A673 (cell line): ENCODE measurements at regions of chr3 and their contacts with region 1.

Region 1: GRCh38 chr3:4656059-4656458 is 162.9 kb downstream of the ITPR1 start:
- DNase-seq: peak; percentile 82
- H3K4me3 ChIP-seq: no peak overlapping the region
- H3K27ac ChIP-seq: no peak overlapping the region
- H3K4me1 ChIP-seq: no peaks in the 10 kb centered on the region
- H3K27me3 ChIP-seq: no peaks in the 10 kb centered on the region
- CTCF ChIP-seq: peak; percentile 89

Region 2: GRCh38 chr3:4394048-4394447 is 262.0 kb before region 1 on chr3:
- CTCF ChIA-PET with region 1: no interaction called
- POLR2A ChIA-PET with region 1: no interaction called
- intact Hi-C with region 1: no loop called
- DNase-seq: peak; percentile 7
- H3K4me3 ChIP-seq: no peak overlapping the region
- H3K27ac ChIP-seq: no peak overlapping the region
- H3K4me1 ChIP-seq: no peaks in the 10 kb centered on the region
- H3K27me3 ChIP-seq: no peaks in the 10 kb centered on the region
- CTCF ChIP-seq: no peak

Region 3: DNA sequence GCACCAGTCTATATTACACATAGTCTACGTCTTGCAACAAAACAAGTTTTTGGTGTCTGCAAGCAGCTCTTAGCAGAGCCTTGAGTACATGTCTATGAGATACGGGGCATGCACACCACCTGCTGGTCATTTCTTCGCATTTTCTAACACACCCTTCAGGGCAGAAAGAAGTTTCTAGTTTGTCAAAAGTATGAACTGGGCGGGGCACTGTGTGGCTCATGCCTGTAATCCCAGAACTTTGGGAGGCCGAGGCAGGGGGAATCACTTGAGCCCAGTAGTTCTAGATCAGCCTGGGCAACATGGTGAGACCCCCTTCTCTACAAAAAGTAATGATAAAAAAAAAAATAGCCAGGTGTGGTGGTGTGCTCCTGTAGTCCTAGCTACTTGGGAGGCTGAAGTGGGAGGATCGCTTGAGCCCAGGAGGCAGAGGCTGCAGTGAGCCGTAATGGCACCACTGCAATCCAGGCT is 401.8 kb after region 1 on chr3:
- CTCF ChIA-PET with region 1: no interaction called
- POLR2A ChIA-PET with region 1: interaction called, 14 read pairs
- intact Hi-C with region 1: loop called (anchors 1 kb)
- DNase-seq: peak; percentile 80
- H3K4me3 ChIP-seq: no peak overlapping the region
- H3K27ac ChIP-seq: no peak overlapping the region
- H3K4me1 ChIP-seq: peaks cover 15% of the 10 kb centered on the region
- H3K27me3 ChIP-seq: no peaks in the 10 kb centered on the region
- CTCF ChIP-seq: peak; percentile 66